AG04450 (cell line): ENCODE measurements at regions of chr10 and their contacts with region 1.

Region 1: DNA sequence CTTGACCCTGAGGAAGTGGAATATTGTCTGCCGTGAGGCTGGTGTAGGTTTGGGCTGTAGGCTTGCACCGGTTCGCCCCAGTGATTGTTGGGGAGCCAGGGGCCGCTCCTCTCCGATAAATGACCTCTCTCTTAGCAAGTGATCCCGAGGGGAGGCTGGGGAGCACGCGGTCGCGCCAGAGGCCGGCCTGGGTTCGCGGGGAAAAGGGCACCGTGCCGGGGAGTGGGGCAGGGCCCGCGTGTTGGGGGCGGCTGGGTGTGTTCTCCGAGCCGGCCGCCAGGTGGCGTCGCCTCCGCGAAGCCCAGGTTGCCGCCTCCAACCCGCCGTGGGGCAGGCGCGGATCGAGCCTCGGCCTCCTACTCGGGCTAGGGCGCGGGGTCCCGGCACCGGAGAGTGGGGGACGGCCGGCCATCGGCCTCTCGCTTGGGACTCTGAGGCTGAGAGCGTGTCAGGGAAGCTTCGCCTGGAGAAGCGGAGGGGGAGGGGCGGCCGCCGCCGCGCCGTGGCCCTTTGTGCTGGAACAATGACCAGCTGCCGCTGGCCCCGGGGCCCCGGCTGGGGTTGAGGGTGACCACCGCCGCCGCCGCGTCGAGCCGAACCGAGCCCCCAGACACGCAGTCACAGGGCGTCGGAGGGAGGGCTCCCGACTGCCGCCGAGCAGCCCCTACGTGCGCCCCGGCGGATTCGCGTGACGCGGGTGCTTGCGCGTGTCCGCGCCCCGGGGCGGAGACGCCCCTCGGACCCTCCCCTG is 442 bp upstream of the LZTS2 start:
- DNase-seq: no peak
- H3K4me3 ChIP-seq: peak overlapping the region; percentile 90
- H3K27ac ChIP-seq: peak overlapping the region; percentile 95
- H3K27me3 ChIP-seq: no peaks in the 10 kb centered on the region
- CTCF ChIP-seq: peak; percentile 76

Region 2: DNA sequence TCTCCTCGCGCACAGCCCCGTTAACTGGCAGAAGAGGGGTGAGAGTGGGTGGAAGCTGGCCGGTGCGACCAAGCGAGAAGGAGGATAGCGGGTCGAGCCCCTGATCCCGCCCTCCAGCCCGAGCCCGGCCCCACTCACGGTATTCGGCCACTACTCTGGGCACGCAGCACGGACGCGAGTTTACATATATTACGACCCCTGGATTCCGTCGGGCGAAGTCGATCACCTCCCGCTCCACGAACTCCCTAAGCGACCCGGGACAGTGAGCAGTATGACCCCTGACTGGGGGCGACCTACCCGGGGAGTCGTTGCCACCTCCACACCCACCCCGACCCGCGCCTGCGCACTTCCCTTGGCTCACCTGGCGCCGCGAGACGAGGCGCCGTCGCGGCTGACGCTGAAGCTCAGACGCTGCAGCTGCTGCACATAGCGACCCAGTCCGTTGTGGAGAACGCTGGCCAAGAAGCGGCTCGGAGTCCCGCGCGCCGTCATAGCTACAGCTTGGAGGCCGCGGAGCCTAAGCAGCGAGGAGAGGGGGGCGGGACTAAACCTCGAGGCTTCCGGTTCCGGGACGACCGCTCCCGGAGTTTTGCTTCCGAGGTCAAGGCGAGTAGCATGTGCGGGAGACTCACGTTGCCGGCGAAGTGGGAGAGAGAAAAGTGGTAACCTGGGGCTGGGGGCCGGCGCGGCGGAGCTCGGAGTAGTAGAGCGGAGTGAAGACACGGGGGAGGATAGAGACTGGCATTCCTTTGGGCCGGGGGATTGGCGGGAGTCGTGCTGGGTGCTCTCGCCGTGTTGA is 12.0 kb before region 1 on chr10 and contains the starts of genes MRPL43 and TWNK:
- CTCF ChIA-PET with region 1: interaction called, 24 read pairs
- POLR2A ChIA-PET with region 1: no interaction called
- DNase-seq: no peak
- H3K4me3 ChIP-seq: peak within 1 kb of the TSS; percentile 97
- H3K27ac ChIP-seq: peak within 1 kb of the TSS; percentile 39
- H3K27me3 ChIP-seq: no peaks in the 10 kb centered on the region
- CTCF ChIP-seq: no peak
- polyA plus RNA-seq, gene MRPL43: 72.3 and 88.0 TPM in 2 replicates
- polyA plus RNA-seq, gene TWNK: 4.3 and 6.9 TPM in 2 replicates

Region 3: GRCh38 chr10:101130984-101131961 is 132.1 kb after region 1 on chr10 and contains the start of gene TLX1:
- CTCF ChIA-PET with region 1: no interaction called
- POLR2A ChIA-PET with region 1: no interaction called
- DNase-seq: no peak
- H3K4me3 ChIP-seq: no peak within 1 kb of the TSS
- H3K27ac ChIP-seq: no peak within 1 kb of the TSS
- H3K27me3 ChIP-seq: peaks cover 93% of the 10 kb centered on the region
- CTCF ChIP-seq: no peak
- polyA plus RNA-seq, gene TLX1: not detected in 2 replicates